Breast epithelium (tissue), 4 donors: ENCODE measurements at regions of chr3 and their contacts with region 1.

Region 1: GRCh38 chr3:65210026-65210814 is 522.4 kb upstream of the ADAMTS9 start:
- DNase-seq: no peak
- H3K4me3 ChIP-seq: no peak overlapping the region
- H3K27ac ChIP-seq: no peak overlapping the region
- H3K4me1 ChIP-seq: no peaks in the 10 kb centered on the region
- H3K27me3 ChIP-seq: no peaks in the 10 kb centered on the region
- CTCF ChIP-seq: no peak
- POLR2A ChIP-seq: no peak

Region 2: GRCh38 chr3:64824394-64824909 is 385.8 kb before region 1 on chr3:
- intact Hi-C with region 1: no loop called
- DNase-seq: no peak
- H3K4me3 ChIP-seq: no peak overlapping the region
- H3K27ac ChIP-seq: no peak overlapping the region
- H3K4me1 ChIP-seq: no peaks in the 10 kb centered on the region
- H3K27me3 ChIP-seq: no peaks in the 10 kb centered on the region
- CTCF ChIP-seq: no peak
- POLR2A ChIP-seq: no peak

Region 3: DNA sequence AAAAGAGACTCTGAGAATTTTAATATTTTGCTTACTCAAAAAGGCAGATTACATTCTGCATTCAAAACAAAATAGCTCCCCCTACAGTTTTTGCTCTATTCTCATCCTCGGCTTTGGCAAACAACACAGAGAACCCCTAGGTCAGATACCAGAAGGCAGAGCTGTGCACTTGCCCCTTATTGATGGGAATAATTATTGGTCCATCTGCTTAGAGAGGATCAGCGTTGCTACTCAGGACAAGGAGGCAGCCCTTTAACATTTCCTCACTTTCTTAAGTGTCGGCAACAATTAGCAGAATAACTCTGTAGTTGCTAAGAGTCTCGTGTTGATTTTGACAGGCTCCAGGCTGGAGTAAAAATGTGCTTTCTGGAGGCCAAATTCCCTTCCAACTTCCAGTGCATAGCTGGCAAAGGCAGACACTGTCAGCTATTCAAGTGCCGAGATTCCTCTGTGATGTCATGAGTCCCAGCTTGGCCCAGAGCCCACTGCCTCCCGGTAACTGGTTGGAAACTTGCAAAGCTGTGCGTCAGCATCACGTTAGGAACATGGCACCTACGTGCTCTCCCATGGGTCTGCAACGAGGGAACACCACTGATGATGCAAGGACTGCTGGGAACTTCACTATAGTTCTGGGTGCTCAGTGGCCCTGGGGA is 39.7 kb before region 1 on chr3:
- intact Hi-C with region 1: no loop called
- DNase-seq: peak; percentile 80 to 84
- H3K4me3 ChIP-seq: no peak overlapping the region
- H3K27ac ChIP-seq: peak overlapping the region; percentile 41 to 62
- H3K4me1 ChIP-seq: no peaks in the 10 kb centered on the region
- H3K27me3 ChIP-seq: no peaks in the 10 kb centered on the region
- CTCF ChIP-seq: peak in 1 of 3 donors; percentile 7
- POLR2A ChIP-seq: no peak

Region 4: GRCh38 chr3:65767551-65767950 is 557.3 kb after region 1 on chr3:
- intact Hi-C with region 1: loop called (anchors 5 kb)
- DNase-seq: no peak
- H3K4me3 ChIP-seq: no peak overlapping the region
- H3K27ac ChIP-seq: no peak overlapping the region
- H3K4me1 ChIP-seq: no peaks in the 10 kb centered on the region
- H3K27me3 ChIP-seq: no peaks in the 10 kb centered on the region
- CTCF ChIP-seq: no peak
- POLR2A ChIP-seq: no peak

Region 5: GRCh38 chr3:65930648-65931047 is 720.4 kb after region 1 on chr3:
- intact Hi-C with region 1: loop called (anchors 5 kb)
- DNase-seq: no peak
- H3K4me3 ChIP-seq: no peak overlapping the region
- H3K27ac ChIP-seq: no peak overlapping the region
- H3K4me1 ChIP-seq: peaks cover 0 to 16% of the 10 kb centered on the region in 2 donors
- H3K27me3 ChIP-seq: no peaks in the 10 kb centered on the region
- CTCF ChIP-seq: no peak
- POLR2A ChIP-seq: no peak